PC-9 (cell line): ENCODE measurements at regions of chr2 and their contacts with region 1.

Region 1: DNA sequence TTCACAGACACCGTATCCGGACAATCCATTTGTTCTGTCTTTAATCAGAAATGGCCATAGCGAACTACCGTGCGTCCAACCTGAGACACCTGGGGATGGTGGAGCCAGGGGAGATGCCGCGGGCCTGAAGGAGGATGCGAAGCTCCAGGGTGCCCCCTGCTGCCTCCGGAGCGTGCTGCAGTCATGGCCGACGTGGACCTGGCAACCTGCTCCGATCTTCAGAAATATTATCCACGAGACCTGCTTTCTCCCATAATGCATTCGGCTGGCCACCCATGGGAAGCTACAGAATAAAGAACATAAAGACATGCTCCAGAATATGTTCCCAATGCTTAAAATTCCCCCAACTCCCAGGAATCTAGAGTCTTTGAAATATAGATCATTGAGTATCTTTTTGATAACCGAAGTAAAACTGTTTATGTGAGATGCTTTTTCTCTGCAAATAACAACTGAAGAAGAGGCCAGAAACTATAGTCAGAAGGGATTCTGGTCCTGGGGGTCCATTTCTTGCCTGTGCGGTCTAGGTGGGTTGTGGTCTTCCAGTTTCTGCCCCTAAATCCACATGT is 30.7 kb upstream of the SLC66A3 start:
- DNase-seq: peak; percentile 54 to 84
- H3K4me3 ChIP-seq: no peak overlapping the region
- H3K27ac ChIP-seq: no peak overlapping the region
- H3K4me1 ChIP-seq: peaks cover 23% of the 10 kb centered on the region
- H3K27me3 ChIP-seq: no peaks in the 10 kb centered on the region
- CTCF ChIP-seq: peak; percentile 95

Region 2: DNA sequence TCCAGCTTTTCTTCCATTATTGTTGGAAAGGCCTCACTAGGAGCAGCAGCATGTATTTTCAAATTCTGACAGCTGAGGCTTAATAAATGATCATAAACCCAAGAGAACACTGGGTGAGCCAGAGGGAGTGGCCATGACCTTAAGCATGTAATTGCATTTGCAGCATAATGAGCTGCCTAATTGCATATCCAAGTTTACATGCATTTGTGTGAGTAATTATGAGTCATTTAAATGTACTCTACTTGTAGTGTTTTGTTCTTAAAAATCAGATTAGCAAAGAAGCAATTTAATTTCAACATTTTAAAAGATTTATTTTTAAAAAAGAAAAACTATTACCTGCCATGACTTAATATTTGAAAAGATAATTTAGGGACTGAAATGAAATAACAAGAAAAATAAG is 509.6 kb before region 1 on chr2:
- CTCF ChIA-PET with region 1: no interaction called
- POLR2A ChIA-PET with region 1: no interaction called
- intact Hi-C with region 1: no loop called
- DNase-seq: no peak
- H3K4me3 ChIP-seq: no peak overlapping the region
- H3K27ac ChIP-seq: no peak overlapping the region
- H3K4me1 ChIP-seq: no peaks in the 10 kb centered on the region
- H3K27me3 ChIP-seq: no peaks in the 10 kb centered on the region
- CTCF ChIP-seq: no peak

Region 3: DNA sequence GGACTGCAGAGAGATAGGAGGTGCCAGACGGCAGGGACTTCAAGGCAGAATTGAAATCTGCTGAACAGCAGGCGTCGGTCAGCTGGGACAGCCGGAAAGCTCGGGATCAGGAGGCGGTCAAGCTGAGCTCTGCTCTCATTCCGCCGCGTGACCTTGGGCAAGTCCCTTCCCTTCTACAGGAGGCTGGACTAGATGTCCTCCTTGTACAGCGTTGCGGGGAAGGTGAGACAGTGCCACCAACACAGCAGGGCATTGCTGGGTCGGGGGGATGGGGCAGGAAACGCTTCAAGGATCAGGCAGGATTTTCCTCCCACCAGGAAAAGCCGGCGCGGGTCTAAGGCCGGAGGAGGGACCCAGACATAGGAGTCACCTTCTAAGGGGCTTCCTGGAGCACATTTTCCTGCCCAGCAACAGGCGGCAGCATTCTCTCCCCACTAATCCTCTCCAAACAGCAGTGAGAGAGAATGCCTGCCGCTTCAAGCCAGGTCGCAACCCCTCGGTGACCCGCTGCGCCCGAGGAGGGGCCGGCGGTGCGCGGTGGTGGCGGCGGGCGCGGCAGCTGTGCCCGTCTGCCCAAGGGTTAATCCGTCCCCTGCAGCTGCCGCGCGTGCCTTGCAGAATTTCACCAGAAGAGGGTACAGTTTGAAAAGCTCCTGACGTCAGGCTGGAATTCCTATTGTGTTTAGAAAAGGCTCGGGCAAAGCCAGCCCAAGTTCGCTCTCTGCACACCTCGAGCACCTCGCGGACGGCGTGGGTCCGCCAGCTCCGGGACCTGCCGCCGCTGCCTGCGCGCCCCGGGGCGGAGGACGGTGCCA is 213.1 kb before region 1 on chr2 and contains the start of gene KCNF1:
- CTCF ChIA-PET with region 1: no interaction called
- POLR2A ChIA-PET with region 1: no interaction called
- intact Hi-C with region 1: loop called (anchors 2 kb)
- DNase-seq: peak; percentile 65 to 72
- H3K4me3 ChIP-seq: peak within 1 kb of the TSS; percentile 44
- H3K27ac ChIP-seq: no peak within 1 kb of the TSS
- H3K4me1 ChIP-seq: peaks cover 6% of the 10 kb centered on the region; the same call in 1 of the 2 replicates
- H3K27me3 ChIP-seq: 0 out of 2 replicates have a peak, but pooled peaks cover 4% of the 10 kb centered on the region
- CTCF ChIP-seq: peak; percentile 41; the same call in 1 of the 2 replicates
- total RNA-seq, gene KCNF1: 1.0 TPM in 2 replicates

Region 4: GRCh38 chr2:11589316-11589940 is 464.8 kb after region 1 on chr2:
- CTCF ChIA-PET with region 1: interaction called, 11 read pairs
- POLR2A ChIA-PET with region 1: no interaction called
- intact Hi-C with region 1: no loop called
- DNase-seq: no peak
- H3K4me3 ChIP-seq: no peak overlapping the region
- H3K27ac ChIP-seq: no peak overlapping the region
- H3K4me1 ChIP-seq: no peaks in the 10 kb centered on the region
- H3K27me3 ChIP-seq: peaks cover 37% of the 10 kb centered on the region; the same call in 1 of the 2 replicates
- CTCF ChIP-seq: peak; percentile 30; the same call in 1 of the 2 replicates